BJ (cell line): ENCODE measurements at regions of chr18 and their contacts with region 1.

Region 1: GRCh38 chr18:46481048-46481846 is 175.8 kb downstream of the LOXHD1 start:
- DNase-seq: no peak
- H3K4me3 ChIP-seq: no peak overlapping the region
- H3K27me3 ChIP-seq: peaks cover 9% of the 10 kb centered on the region
- CTCF ChIP-seq: peak; percentile 72

Region 2: GRCh38 chr18:46148810-46149209 is 332.4 kb before region 1 on chr18:
- CTCF ChIA-PET with region 1: interaction called, 18 read pairs
- POLR2A ChIA-PET with region 1: no interaction called
- DNase-seq: no peak
- H3K4me3 ChIP-seq: no peak overlapping the region
- H3K27me3 ChIP-seq: no peaks in the 10 kb centered on the region
- CTCF ChIP-seq: peak; percentile 65

Region 3: DNA sequence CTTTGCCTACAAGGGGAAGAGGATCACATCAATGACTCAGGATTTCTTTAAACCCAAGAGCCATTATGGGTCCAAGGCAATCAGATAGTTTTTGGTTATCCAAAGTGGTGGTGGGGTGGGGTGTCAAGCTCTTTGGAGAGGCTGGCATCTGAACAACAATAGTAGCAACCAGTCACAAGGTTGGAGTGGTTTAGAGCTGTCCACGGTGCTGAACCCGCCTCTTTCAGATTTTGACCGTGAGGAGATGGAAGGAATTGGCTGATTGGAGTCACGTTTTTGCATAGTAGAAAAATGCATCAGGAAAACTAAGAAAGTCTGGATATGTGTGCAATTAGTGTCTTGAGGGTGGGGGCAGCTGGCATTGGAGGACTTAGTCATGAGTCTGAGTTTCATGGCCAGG is 15.9 kb after region 1 on chr18:
- CTCF ChIA-PET with region 1: interaction called, 13 read pairs
- POLR2A ChIA-PET with region 1: no interaction called
- DNase-seq: no peak
- H3K4me3 ChIP-seq: no peak overlapping the region
- H3K27me3 ChIP-seq: no peaks in the 10 kb centered on the region
- CTCF ChIP-seq: no peak

Region 4: DNA sequence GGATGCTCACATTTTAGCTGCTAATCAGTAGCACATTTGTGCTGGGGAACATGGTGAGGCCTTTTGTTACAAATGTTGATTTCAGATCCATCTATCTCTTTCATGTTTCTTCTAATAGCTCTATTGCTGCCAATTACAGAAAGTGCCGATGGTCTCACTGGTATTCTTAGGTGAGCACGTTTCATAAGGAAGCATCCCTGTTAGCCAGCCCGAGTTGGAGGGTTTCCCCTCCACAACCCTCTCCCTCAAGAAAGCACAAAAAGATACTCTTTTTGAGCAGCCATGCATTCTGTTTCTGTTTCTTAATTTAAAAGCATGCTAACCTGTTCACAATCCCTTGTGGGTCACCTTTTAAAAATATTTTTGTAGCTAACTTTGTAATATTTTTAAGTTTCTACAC is 306.4 kb after region 1 on chr18:
- CTCF ChIA-PET with region 1: no interaction called
- POLR2A ChIA-PET with region 1: no interaction called
- DNase-seq: no peak
- H3K4me3 ChIP-seq: no peak overlapping the region
- H3K27me3 ChIP-seq: no peaks in the 10 kb centered on the region
- CTCF ChIP-seq: no peak